Activated CD4-positive, alpha-beta T cell treated with anti-CD3 and anti-CD28 coated beads for 36 hours (primary cell): ENCODE measurements at regions of chr2 and their contacts with region 1.

Region 1: GRCh38 chr2:239380831-239381708 is 19.8 kb downstream of the HDAC4 start:
- DNase-seq: peak; percentile 86
- ATAC-seq: peak; percentile 84
- H3K4me3 Mint-ChIP-seq: peak overlapping the region; percentile 62
- H3K27ac Mint-ChIP-seq: peak overlapping the region; percentile 94
- H3K4me1 Mint-ChIP-seq: peaks cover 40% of the 10 kb centered on the region
- H3K27me3 Mint-ChIP-seq: no peaks in the 10 kb centered on the region

Region 2: GRCh38 chr2:239216614-239217273 is 164.3 kb before region 1 on chr2:
- CTCF ChIA-PET with region 1: no interaction called
- POLR2A ChIA-PET with region 1: interaction called, 4 read pairs
- intact Hi-C with region 1: loop called (anchors 1 to 2 kb)
- DNase-seq: peak; percentile 71
- ATAC-seq: peak; percentile 97
- H3K4me3 Mint-ChIP-seq: peak overlapping the region; percentile 66
- H3K27ac Mint-ChIP-seq: peak overlapping the region; percentile 95
- H3K4me1 Mint-ChIP-seq: peaks cover 73% of the 10 kb centered on the region
- H3K27me3 Mint-ChIP-seq: no peaks in the 10 kb centered on the region

Region 3: DNA sequence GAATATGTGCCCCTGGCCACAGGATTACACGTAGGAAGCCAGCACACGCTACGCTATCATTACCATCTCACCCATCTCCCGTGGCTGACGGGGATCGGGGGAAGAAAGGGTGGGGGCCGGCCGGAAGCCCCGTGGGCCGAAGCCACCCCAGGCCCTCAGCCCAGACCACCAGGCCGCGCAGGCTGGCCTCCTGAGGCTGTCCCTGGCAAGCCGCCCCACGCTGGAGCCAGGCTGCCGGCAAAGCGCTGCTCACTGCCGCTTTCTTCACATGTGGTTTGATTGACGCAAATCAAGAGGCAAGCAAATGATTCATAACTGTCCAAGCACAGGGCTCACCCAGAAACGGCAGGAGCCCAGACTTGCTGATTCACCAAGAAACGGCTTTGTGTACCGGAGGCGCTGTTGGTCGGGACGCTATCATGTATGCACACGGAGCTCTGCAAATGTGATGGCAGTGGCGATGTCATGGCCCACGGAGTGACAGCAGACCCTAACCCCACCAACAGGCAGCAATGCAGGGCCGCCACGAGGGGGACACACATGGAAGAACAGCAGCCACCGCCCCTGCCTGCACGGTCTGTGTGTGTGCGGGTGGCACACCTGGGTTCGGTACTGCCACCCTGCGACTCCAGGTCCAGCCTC is 105.9 kb before region 1 on chr2:
- CTCF ChIA-PET with region 1: interaction called, 6 read pairs
- POLR2A ChIA-PET with region 1: interaction called, 6 read pairs
- intact Hi-C with region 1: loop called (anchors 1 to 2 kb)
- DNase-seq: peak; percentile 91
- ATAC-seq: peak; percentile 89
- H3K4me3 Mint-ChIP-seq: peak overlapping the region; percentile 53
- H3K27ac Mint-ChIP-seq: peak overlapping the region; percentile 83
- H3K4me1 Mint-ChIP-seq: peaks cover 46% of the 10 kb centered on the region
- H3K27me3 Mint-ChIP-seq: peaks cover 31% of the 10 kb centered on the region

Region 4: DNA sequence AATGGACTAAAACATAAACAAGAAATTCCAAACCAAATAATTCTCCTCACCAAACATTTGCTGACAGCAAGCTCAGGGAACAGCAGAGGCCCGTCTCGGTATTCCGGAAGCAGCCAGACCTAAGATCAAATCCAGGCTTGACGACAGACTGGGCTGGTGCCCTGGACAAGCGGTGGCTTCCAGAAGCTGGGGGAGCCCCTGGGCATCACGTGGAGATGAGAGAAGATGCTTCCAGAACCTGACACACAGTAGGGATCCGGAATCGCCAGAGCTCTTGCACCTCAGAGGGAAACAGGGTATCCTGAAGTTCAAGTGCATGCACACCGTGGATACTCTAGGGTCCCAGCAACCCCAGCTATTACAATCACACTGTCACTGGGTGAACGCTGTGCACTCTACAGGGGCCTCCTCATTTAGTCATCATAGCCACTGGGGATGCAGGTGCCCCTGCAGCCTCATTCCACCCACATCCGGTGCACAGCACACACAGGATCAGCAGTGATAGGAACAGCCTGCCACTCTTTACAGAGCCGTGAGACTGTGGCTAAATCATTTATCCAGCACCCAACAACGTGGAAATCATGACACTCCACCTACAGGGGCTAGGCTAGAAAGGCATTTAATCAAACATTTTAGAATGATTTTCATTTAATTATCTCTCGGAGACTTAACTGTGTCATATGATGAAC is 82.8 kb before region 1 on chr2:
- CTCF ChIA-PET with region 1: interaction called, 10 read pairs
- POLR2A ChIA-PET with region 1: interaction called, 6 read pairs
- intact Hi-C with region 1: loop called in 1 of 2 experiments (anchors 2 kb)
- DNase-seq: peak; percentile 86
- ATAC-seq: peak; percentile 91
- H3K4me3 Mint-ChIP-seq: peak overlapping the region; percentile 63
- H3K27ac Mint-ChIP-seq: peak overlapping the region; percentile 75
- H3K4me1 Mint-ChIP-seq: peaks cover 71% of the 10 kb centered on the region
- H3K27me3 Mint-ChIP-seq: peaks cover 8% of the 10 kb centered on the region

Region 5: GRCh38 chr2:239369631-239370161 is 11.4 kb before region 1 on chr2:
- CTCF ChIA-PET with region 1: interaction called, 21 read pairs
- POLR2A ChIA-PET with region 1: interaction called, 40 read pairs
- intact Hi-C with region 1: loop called (anchors 1 kb)
- DNase-seq: peak; percentile 91
- ATAC-seq: peak; percentile 97
- H3K4me3 Mint-ChIP-seq: peak overlapping the region; percentile 70
- H3K27ac Mint-ChIP-seq: peak overlapping the region; percentile 90
- H3K4me1 Mint-ChIP-seq: peaks cover 8% of the 10 kb centered on the region
- H3K27me3 Mint-ChIP-seq: no peaks in the 10 kb centered on the region

Region 6: GRCh38 chr2:239607517-239608191 is 226.6 kb after region 1 on chr2:
- CTCF ChIA-PET with region 1: no interaction called
- POLR2A ChIA-PET with region 1: no interaction called
- intact Hi-C with region 1: no loop called
- DNase-seq: no peak
- ATAC-seq: no peak
- H3K4me3 Mint-ChIP-seq: no peak overlapping the region
- H3K27ac Mint-ChIP-seq: no peak overlapping the region
- H3K4me1 Mint-ChIP-seq: peaks cover 5% of the 10 kb centered on the region
- H3K27me3 Mint-ChIP-seq: peaks cover 4% of the 10 kb centered on the region

Region 7: DNA sequence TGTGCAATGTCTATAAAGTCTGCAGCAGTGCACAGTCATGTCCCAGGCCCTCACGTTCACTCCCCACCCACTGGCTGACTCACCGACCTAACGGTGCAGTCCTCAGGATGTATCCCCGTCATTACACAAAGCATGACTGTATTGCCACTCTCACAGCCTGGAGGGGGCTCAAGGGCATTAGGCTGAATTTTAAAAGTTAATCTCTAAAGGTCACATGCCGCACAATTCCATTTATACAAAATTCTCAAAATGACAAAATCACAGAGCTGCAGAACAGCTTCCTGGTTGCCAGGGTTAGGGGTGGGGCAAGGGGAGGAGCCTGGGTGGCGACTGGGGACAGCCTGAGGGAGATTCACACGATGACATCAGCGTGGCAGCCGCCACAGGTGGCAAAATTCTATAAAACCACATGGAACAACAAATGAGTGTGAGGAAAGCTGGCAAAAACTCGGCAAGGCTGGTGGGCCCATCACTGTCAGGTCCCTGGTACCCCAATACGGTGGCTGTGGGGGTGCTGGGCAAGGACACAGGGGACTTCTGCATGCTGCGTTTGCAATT is 546.4 kb after region 1 on chr2:
- CTCF ChIA-PET with region 1: no interaction called
- POLR2A ChIA-PET with region 1: no interaction called
- intact Hi-C with region 1: loop called in 1 of 2 experiments (anchors 1 kb)
- DNase-seq: peak; percentile 89
- ATAC-seq: peak; percentile 100
- H3K4me3 Mint-ChIP-seq: peak overlapping the region; percentile 26
- H3K27ac Mint-ChIP-seq: peak overlapping the region; percentile 67
- H3K4me1 Mint-ChIP-seq: peaks cover 24% of the 10 kb centered on the region
- H3K27me3 Mint-ChIP-seq: peaks cover 3% of the 10 kb centered on the region